Spleen (tissue), 13 donors: ENCODE measurements at regions of chrX and their contacts with region 1.

Region 1: GRCh38 chrX:7996414-7996813 is 69.2 kb upstream of the PNPLA4 start:
- DNase-seq: no peak
- H3K4me3 ChIP-seq: no peak overlapping the region
- H3K27ac ChIP-seq: no peak overlapping the region
- H3K4me1 ChIP-seq: no peaks in the 10 kb centered on the region
- H3K27me3 ChIP-seq: no peaks in the 10 kb centered on the region
- CTCF ChIP-seq: peak in 10 of 11 experiments; percentile 30 to 62 (median 54)
- POLR2A ChIP-seq: no peak

Region 2: DNA sequence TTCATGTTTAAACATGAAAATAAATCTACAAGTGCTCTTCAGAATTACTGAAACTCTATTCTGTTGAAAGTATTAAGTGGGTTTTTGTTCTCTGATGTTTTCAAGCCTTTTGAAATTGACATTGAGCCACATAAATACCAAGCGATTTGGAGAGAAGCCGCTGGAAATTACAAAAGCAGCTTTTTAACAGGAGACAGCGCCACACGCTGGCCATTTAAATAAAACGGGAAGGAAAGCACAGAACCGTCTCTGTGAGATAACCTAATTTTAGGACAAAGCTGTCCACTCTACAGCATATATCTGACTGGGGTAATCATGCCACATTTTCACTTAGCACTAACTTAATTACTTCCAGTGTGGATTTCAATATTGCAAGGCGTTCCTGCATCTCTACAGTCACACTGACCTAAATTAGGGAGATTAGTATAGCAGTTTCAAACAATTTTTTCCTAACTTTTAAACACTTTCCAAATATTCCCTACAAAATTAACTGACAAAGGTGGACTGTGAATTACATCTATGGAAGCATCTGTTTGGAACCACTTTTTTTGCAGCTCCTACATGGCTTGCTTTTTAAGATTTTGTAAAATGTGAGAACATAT is 742.3 kb after region 1 on chrX:
- intact Hi-C with region 1: loop called (anchors 5 kb)
- DNase-seq: no peak
- H3K4me3 ChIP-seq: no peak overlapping the region
- H3K27ac ChIP-seq: no peak overlapping the region
- H3K4me1 ChIP-seq: no peaks in the 10 kb centered on the region
- H3K27me3 ChIP-seq: peaks cover 0 to 28% (median 0%) of the 10 kb centered on the region in 7 donors
- CTCF ChIP-seq: peak in 7 of 11 experiments; percentile 27 to 58 (median 49)
- POLR2A ChIP-seq: no peak

Region 3: GRCh38 chrX:8783100-8784098 is 787.0 kb after region 1 on chrX:
- intact Hi-C with region 1: no loop called
- DNase-seq: peak; percentile 79
- H3K4me3 ChIP-seq: no peak overlapping the region
- H3K27ac ChIP-seq: no peak overlapping the region
- H3K4me1 ChIP-seq: no peaks in the 10 kb centered on the region
- H3K27me3 ChIP-seq: peaks cover 0 to 8% (median 0%) of the 10 kb centered on the region in 7 donors
- CTCF ChIP-seq: peak in 6 of 11 experiments; percentile 16 to 57 (median 33)
- POLR2A ChIP-seq: no peak